Activated CD4-positive, alpha-beta memory T cell treated with anti-CD3 and anti-CD28 coated beads for 36 hours (primary cell): ENCODE measurements at regions of chr2 and their contacts with region 1.

Region 1: GRCh38 chr2:127197475-127198385 is 22.4 kb downstream of the CYP27C1 start:
- DNase-seq: peak; percentile 81
- H3K4me3 Mint-ChIP-seq: peak overlapping the region; percentile 60
- H3K27ac Mint-ChIP-seq: no peak overlapping the region
- H3K4me1 Mint-ChIP-seq: peaks cover 4% of the 10 kb centered on the region
- H3K27me3 Mint-ChIP-seq: peaks cover 2% of the 10 kb centered on the region

Region 2: DNA sequence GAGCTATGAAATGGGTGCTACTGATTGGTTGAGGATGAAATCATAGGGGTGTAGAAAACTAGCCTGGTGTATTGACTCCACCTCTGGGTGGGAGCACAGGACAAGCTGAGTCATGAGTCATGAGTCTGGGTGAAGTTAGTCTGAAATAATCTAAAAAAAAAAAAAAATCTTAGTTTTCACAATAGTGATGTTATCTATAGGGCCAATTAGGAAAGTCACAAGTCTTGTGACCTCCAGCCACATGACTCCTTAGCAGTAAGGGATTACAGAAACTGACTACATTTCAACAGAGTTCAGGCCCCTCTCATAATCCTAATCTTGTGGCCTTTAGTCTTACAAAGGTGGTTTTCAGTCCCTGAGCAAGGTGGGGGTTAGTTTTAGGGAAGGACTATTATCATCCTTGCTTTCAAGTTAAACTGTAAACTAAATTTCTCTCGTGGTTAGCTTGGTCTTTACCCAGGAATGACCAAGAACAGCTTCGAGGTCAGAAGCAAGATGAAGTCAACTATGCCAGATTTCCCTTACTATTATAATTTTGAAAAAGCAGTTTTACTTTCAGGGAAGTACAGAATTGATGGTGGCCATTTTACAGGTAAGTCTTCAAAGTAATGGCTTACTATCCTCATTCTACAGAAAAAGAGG is 879.8 kb before region 1 on chr2:
- CTCF ChIA-PET with region 1: no interaction called
- POLR2A ChIA-PET with region 1: no interaction called
- intact Hi-C with region 1: no loop called
- DNase-seq: no peak
- H3K4me3 Mint-ChIP-seq: no peak overlapping the region
- H3K27ac Mint-ChIP-seq: no peak overlapping the region
- H3K4me1 Mint-ChIP-seq: no peaks in the 10 kb centered on the region
- H3K27me3 Mint-ChIP-seq: peaks cover 5% of the 10 kb centered on the region

Region 3: DNA sequence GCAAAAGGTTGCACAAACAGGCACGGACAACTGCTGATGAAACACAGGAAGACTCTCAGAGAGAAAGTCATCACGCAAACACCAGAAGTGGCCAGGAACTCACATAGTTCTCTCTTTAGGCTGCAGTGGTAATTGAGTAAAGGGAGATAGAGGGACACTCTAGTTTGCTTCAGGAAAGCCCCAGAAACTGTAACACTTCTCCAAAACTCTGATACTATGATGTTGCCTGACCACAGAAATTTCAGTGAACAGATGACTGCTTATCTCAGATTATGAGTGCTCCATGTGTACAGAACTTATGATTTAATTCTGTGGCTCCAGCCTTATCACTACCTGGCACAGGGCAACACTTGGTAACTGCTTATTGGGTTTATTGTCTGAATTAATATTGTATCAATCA is 853.2 kb before region 1 on chr2:
- CTCF ChIA-PET with region 1: no interaction called
- POLR2A ChIA-PET with region 1: no interaction called
- intact Hi-C with region 1: no loop called
- DNase-seq: no peak
- H3K4me3 Mint-ChIP-seq: no peak overlapping the region
- H3K27ac Mint-ChIP-seq: no peak overlapping the region
- H3K4me1 Mint-ChIP-seq: no peaks in the 10 kb centered on the region
- H3K27me3 Mint-ChIP-seq: no peaks in the 10 kb centered on the region

Region 4: GRCh38 chr2:127106951-127107621 is 90.6 kb before region 1 on chr2 and contains the start of gene BIN1:
- CTCF ChIA-PET with region 1: no interaction called
- POLR2A ChIA-PET with region 1: no interaction called
- intact Hi-C with region 1: no loop called
- DNase-seq: peak; percentile 82
- H3K4me3 Mint-ChIP-seq: peak within 1 kb of the TSS; percentile 70
- H3K27ac Mint-ChIP-seq: no peak within 1 kb of the TSS
- H3K4me1 Mint-ChIP-seq: peaks cover 4% of the 10 kb centered on the region
- H3K27me3 Mint-ChIP-seq: peaks cover 12% of the 10 kb centered on the region
- total RNA-seq, gene BIN1: 55.4 to 58.2 TPM

Region 5: GRCh38 chr2:127270636-127271035 is 72.9 kb after region 1 on chr2:
- CTCF ChIA-PET with region 1: interaction called, 5 read pairs
- POLR2A ChIA-PET with region 1: no interaction called
- intact Hi-C with region 1: loop called (anchors 5 kb)
- DNase-seq: no peak
- H3K4me3 Mint-ChIP-seq: no peak overlapping the region
- H3K27ac Mint-ChIP-seq: no peak overlapping the region
- H3K4me1 Mint-ChIP-seq: peaks cover 3% of the 10 kb centered on the region
- H3K27me3 Mint-ChIP-seq: no peaks in the 10 kb centered on the region

Region 6: GRCh38 chr2:127293748-127294562 is 96.2 kb after region 1 on chr2 and contains the start of gene ERCC3:
- CTCF ChIA-PET with region 1: interaction called, 12 read pairs
- POLR2A ChIA-PET with region 1: no interaction called
- intact Hi-C with region 1: loop called (anchors 1 kb)
- DNase-seq: peak; percentile 89
- H3K4me3 Mint-ChIP-seq: peak within 1 kb of the TSS; percentile 100
- H3K27ac Mint-ChIP-seq: peak within 1 kb of the TSS; percentile 97
- H3K4me1 Mint-ChIP-seq: peaks cover 28% of the 10 kb centered on the region
- H3K27me3 Mint-ChIP-seq: no peaks in the 10 kb centered on the region
- total RNA-seq, gene ERCC3: 46.1 to 47.3 TPM

Region 7: DNA sequence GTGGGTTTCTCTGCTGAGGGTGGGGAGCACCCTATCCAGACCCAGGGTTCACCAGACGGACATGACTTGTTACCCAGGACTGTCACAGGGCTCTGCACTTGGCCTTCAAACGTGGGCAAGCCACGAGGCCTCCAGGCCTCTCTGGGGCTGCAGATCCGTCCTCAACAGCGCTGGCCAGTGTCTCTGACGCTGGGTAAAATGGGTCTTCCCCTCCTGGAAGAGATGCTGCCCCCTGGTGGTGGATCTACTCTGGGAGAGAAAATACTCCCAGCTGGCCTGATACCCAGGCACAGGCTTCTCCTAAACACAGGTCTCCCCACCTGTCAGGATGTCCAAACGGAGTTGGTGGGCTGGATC is 451.9 kb after region 1 on chr2:
- CTCF ChIA-PET with region 1: interaction called, 8 read pairs
- POLR2A ChIA-PET with region 1: no interaction called
- intact Hi-C with region 1: loop called (anchors 1 kb)
- DNase-seq: peak; percentile 83
- H3K4me3 Mint-ChIP-seq: no peak overlapping the region
- H3K27ac Mint-ChIP-seq: no peak overlapping the region
- H3K4me1 Mint-ChIP-seq: peaks cover 7% of the 10 kb centered on the region
- H3K27me3 Mint-ChIP-seq: no peaks in the 10 kb centered on the region